GM10248 (cell line): ENCODE measurements at regions of chr12 and their contacts with region 1.

Region 1: GRCh38 chr12:92389466-92389865 is 243.8 kb upstream of the BTG1 start:
- DNase-seq: no peak
- CTCF ChIP-seq: no peak

Region 2: GRCh38 chr12:92369643-92370042 is 19.8 kb before region 1 on chr12:
- CTCF ChIA-PET with region 1: interaction called, 14 read pairs
- POLR2A ChIA-PET with region 1: no interaction called
- DNase-seq: no peak
- CTCF ChIP-seq: no peak